ENCODE measurements at regions of chr9 and their contacts with region 1.

Region 1: DNA sequence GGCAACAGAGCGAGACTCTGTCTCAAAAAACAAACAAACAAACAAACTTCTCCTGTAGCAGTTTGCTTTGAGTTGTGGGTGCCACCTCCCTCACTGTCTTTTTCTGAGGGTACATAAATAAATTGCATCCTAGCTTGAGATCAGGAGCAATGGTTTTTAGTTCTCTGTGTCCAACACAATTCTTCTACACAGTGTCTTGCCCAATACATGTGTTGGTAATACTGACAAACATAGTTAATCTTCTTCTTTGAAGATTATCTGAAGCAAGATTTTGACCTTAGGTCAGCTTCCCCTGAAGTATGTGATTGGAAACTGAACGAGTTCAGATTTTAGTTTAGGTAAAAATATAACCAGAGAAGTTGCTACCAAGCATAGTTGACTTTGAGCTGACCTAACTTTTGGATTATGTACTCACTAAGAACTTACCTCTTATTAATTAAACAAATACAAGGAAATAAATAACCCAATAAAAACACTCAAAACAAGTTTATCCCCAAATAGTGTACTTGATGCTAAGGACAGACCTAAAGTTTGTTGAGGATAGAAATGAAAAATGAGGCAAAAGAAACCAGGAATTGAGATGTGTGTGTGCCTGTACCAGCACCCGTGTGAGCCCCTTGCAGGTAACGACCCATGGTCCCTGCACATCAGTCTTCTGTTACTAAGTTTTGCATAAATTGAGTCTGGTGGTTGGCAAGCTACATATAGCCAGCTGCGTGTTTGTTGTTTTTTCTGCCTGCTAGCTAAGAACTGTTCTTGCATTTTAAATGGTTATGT is 16.2 kb downstream of the TJP2 start:
- DNase-seq: no peak
- H3K4me3 Mint-ChIP-seq: no peak overlapping the region
- H3K27ac Mint-ChIP-seq: no peak overlapping the region
- H3K4me1 Mint-ChIP-seq: peaks cover 36% of the 10 kb centered on the region
- H3K27me3 Mint-ChIP-seq: no peaks in the 10 kb centered on the region

Region 2: DNA sequence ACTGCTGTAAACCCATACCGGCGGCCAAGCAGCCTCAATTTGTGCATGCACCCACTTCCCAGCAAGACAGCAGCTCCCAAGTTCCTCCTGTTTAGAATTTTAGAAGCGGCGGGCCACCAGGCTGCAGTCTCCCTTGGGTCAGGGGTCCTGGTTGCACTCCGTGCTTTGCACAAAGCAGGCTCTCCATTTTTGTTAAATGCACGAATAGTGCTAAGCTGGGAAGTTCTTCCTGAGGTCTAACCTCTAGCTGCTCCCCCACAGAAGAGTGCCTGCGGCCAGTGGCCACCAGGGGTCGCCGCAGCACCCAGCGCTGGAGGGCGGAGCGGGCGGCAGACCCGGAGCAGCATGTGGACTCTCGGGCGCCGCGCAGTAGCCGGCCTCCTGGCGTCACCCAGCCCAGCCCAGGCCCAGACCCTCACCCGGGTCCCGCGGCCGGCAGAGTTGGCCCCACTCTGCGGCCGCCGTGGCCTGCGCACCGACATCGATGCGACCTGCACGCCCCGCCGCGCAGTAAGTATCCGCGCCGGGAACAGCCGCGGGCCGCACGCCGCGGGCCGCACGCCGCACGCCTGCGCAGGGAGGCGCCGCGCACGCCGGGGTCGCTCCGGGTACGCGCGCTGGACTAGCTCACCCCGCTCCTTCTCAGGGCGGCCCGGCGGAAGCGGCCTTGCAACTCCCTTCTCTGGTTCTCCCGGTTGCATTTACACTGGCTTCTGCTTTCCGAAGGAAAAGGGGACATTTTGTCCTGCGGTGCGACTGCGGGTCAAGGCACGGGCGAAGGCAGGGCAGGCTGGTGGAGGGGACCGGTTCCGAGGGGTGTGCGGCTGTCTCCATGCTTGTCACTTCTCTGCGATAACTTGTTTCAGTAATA is 154.6 kb before region 1 on chr9 and contains the start of gene FXN:
- CTCF ChIA-PET with region 1: interaction called, 10 read pairs
- POLR2A ChIA-PET with region 1: no interaction called
- DNase-seq: peak; percentile 79
- H3K4me3 Mint-ChIP-seq: peak within 1 kb of the TSS; percentile 87
- H3K27ac Mint-ChIP-seq: peak within 1 kb of the TSS; percentile 92
- H3K4me1 Mint-ChIP-seq: peaks cover 33% of the 10 kb centered on the region
- H3K27me3 Mint-ChIP-seq: no peaks in the 10 kb centered on the region
- total RNA-seq, gene FXN: 27.2 to 32.0 TPM

Region 3: DNA sequence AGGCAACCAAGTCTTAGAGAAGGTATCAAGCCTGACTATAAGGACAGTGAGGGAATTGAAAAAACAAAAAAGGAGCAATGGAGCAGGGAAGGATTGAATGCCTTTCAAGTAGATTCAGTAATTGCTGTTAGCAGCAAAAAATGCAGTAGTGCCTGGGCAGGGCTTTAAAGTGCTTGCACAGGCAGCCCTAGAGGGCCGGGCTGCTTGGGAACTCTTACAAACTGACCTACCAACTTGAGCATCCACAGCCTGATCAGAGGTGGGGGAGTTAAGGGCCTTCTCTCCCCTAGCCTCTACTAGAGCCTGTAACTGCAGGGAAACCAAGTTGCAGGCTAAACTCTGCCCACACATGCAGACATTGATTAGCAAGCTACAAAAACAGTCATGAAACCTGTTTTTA is 135.3 kb before region 1 on chr9:
- CTCF ChIA-PET with region 1: interaction called, 36 read pairs
- POLR2A ChIA-PET with region 1: no interaction called
- DNase-seq: no peak
- H3K4me3 Mint-ChIP-seq: no peak overlapping the region
- H3K27ac Mint-ChIP-seq: no peak overlapping the region
- H3K4me1 Mint-ChIP-seq: peaks cover 16% of the 10 kb centered on the region
- H3K27me3 Mint-ChIP-seq: no peaks in the 10 kb centered on the region

Measured in activated CD4-positive, alpha-beta T cell treated with anti-CD3 and anti-CD28 coated beads, Interleukin-2, amount 10 ng/mL, durations not matched to agents 7 days and 5 days (primary cell).